WTC11 (cell line): ENCODE measurements at regions of chr15 and their contacts with region 1.

Region 1: GRCh38 chr15:77538027-77538451 is 94.7 kb downstream of the LINGO1 start:
- DNase-seq: no peak
- ATAC-seq: no peak
- H3K4me3 Mint-ChIP-seq: no peak overlapping the region
- H3K27ac Mint-ChIP-seq: peak overlapping the region; percentile 96
- H3K4me1 Mint-ChIP-seq: peaks cover 91% of the 10 kb centered on the region
- H3K27me3 Mint-ChIP-seq: peaks cover 2% of the 10 kb centered on the region; the same call in 1 of the 2 replicates
- CTCF ChIP-seq: no peak

Region 2: DNA sequence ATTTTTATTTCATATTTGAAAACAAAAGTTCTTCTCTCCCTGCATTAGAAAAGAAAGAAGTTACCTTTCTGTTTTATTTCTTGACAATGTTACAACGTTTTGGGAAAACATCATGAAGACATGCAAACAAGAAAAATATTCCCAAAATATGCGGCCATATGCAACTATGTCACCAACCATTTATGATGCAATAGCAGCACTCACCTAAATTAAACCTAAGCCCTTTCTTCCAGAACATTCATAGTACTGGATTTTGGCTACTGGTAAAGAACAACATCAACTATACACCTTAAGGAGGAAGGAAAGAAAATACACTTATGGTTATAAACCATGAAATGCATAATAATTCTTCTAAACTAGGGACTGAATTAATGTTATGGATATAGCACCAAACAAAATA is 282.7 kb before region 1 on chr15:
- CTCF ChIA-PET with region 1: no interaction called
- POLR2A ChIA-PET with region 1: no interaction called
- DNase-seq: no peak
- ATAC-seq: no peak
- H3K4me3 Mint-ChIP-seq: no peak overlapping the region
- H3K27ac Mint-ChIP-seq: no peak overlapping the region
- H3K4me1 Mint-ChIP-seq: no peaks in the 10 kb centered on the region; the same call in 1 of the 2 replicates
- H3K27me3 Mint-ChIP-seq: no peaks in the 10 kb centered on the region
- CTCF ChIP-seq: no peak

Region 3: DNA sequence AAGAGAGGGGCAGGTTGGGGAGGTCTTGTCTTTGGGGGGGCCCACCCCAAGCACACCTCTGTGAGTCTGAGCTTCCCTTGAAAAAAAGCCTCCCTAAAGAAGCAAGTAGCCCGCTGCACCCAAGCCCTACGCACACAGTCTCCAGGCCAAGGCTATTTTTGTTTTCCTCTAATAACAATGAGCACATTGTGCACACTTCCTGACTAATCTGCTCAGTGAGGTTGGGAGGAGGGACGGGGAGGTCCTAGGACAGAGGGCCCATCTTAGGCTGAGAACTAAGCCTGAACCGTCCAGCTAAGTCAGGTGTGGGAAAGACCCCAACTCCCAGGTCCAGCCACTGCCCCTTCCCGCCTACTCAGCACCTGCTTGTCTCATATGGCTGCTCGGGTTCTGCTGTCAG is 30.1 kb before region 1 on chr15:
- CTCF ChIA-PET with region 1: interaction called, 87 read pairs
- POLR2A ChIA-PET with region 1: interaction called, 6 read pairs
- DNase-seq: no peak
- ATAC-seq: no peak
- H3K4me3 Mint-ChIP-seq: no peak overlapping the region
- H3K27ac Mint-ChIP-seq: no peak overlapping the region
- H3K4me1 Mint-ChIP-seq: peaks cover 90% of the 10 kb centered on the region
- H3K27me3 Mint-ChIP-seq: no peaks in the 10 kb centered on the region
- CTCF ChIP-seq: no peak